ENCODE measurements at regions of chr17 and their contacts with region 1.

Region 1: GRCh38 chr17:28552246-28552999 is at the start of gene UNC119:
- DNase-seq: no peak
- ATAC-seq: peak; percentile 78
- H3K4me3 ChIP-seq: peak within 1 kb of the TSS; percentile 98
- H3K27ac ChIP-seq: peak within 1 kb of the TSS; percentile 73
- H3K4me1 ChIP-seq: peaks cover 33% of the 10 kb centered on the region
- H3K27me3 ChIP-seq: no peaks in the 10 kb centered on the region
- CTCF ChIP-seq: no peak
- EP300 ChIP-seq: no peak
- POLR2A ChIP-seq: peak; percentile 90
- RAD21 ChIP-seq: no peak
- polyA plus RNA-seq, gene UNC119: 2.7 to 7.4 TPM

Region 2: GRCh38 chr17:28446728-28447395 is 105.6 kb before region 1 on chr17:
- CTCF ChIA-PET with region 1: no interaction called
- POLR2A ChIA-PET with region 1: no interaction called
- RAD21 ChIA-PET with region 1: no interaction called
- SMC1A ChIA-PET with region 1: no interaction called
- in situ Hi-C with region 1: no loop called
- intact Hi-C with region 1: loop called (anchors 10 kb)
- DNase-seq: no peak
- ATAC-seq: no peak
- H3K4me3 ChIP-seq: no peak overlapping the region
- H3K27ac ChIP-seq: no peak overlapping the region
- H3K4me1 ChIP-seq: no peaks in the 10 kb centered on the region
- H3K27me3 ChIP-seq: no peaks in the 10 kb centered on the region
- CTCF ChIP-seq: no peak
- EP300 ChIP-seq: no peak
- POLR2A ChIP-seq: no peak
- RAD21 ChIP-seq: no peak

Region 3: DNA sequence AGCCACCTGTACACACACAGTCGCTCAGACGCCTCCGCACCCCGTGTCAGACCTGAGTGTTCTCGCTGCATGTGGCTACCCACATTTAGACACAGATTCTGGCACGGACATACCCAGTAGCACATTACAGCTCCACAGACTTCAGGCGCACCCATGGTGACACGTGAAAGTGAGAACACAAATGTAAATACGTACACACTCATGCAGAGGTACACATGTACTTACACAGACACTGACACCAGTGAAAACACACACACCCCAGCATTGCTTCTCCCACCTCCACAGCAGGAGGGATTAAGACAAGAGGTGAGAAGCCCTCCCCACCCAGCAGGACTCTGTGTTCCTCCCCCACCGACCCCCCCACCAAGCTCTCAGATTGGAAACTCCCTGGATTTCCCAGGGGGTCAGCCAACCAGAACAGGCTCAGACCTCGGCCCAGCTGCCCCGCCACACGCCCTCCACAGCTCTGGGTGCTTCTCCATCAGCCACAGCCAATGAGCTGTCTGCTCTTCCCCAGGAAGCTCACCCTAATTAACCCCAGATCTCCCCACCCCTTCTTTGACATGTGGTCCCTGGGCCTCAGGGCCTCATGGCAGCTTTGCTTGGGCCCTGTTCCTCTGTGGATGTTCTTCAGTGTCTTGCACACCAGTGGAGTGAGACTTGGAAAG is 51.6 kb before region 1 on chr17:
- CTCF ChIA-PET with region 1: interaction called, 316 read pairs
- POLR2A ChIA-PET with region 1: interaction called, 48 read pairs
- RAD21 ChIA-PET with region 1: interaction called, 37 read pairs
- SMC1A ChIA-PET with region 1: interaction called, 53 read pairs
- in situ Hi-C with region 1: loop called (anchors 5 kb)
- intact Hi-C with region 1: no loop called
- DNase-seq: peak; percentile 63
- ATAC-seq: peak; percentile 93
- H3K4me3 ChIP-seq: peak overlapping the region; percentile 59
- H3K27ac ChIP-seq: peak overlapping the region; percentile 87
- H3K4me1 ChIP-seq: peaks cover 26% of the 10 kb centered on the region
- H3K27me3 ChIP-seq: no peaks in the 10 kb centered on the region
- CTCF ChIP-seq: no peak
- EP300 ChIP-seq: no peak
- POLR2A ChIP-seq: peak; percentile 47; the same call in 1 of the 2 replicates
- RAD21 ChIP-seq: no peak

Region 4: DNA sequence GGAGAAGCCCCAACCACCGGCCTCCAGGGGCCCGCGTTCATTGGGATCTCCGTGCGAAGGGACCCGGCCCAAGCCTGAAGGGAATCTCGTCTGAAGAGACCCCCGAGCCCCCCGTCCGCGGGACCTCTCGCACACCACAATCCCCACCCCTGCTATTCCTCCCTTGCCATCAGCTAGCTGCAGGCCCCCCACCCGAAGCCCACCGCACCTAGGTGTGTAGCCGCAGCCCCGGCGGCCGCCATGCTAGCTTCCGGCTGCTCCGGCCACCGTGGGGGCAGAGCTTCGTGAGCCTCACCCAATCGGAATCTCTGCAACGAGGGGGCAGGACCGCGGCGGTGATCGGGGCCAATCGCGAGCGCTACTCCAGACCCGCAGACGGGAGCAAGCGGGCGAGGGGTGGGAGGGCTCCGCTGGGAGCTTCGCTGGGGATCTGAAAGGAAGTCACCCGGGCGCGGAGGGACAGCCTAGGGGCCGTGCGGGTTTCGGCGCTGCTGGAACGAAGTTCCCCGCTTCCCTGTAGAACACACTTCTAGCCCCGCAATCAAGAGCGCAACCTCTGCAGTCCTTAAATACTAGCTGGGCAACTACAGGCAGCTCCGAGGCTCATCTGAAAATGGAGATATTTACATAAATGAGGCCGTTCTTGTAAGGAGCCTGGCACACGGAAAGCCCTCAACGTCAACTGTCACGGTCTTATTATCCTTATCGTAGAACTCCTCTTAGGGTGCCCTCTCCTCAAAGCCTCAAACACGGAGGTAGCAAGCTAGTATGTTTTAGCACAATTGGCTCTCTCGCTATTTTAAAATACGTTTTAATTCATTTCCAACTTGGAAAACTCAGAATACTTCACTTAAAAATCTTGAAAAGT is 19.1 kb after region 1 on chr17 and contains the start of gene PIGS:
- CTCF ChIA-PET with region 1: interaction called, 83 read pairs
- POLR2A ChIA-PET with region 1: interaction called, 148 read pairs
- RAD21 ChIA-PET with region 1: interaction called, 102 read pairs
- SMC1A ChIA-PET with region 1: interaction called, 89 read pairs
- in situ Hi-C with region 1: no loop called
- intact Hi-C with region 1: loop called (anchors 1 kb)
- DNase-seq: peak; percentile 68
- ATAC-seq: peak; percentile 97
- H3K4me3 ChIP-seq: peak within 1 kb of the TSS; percentile 90
- H3K27ac ChIP-seq: peak within 1 kb of the TSS; percentile 85
- H3K4me1 ChIP-seq: peaks cover 22% of the 10 kb centered on the region
- H3K27me3 ChIP-seq: no peaks in the 10 kb centered on the region
- CTCF ChIP-seq: no peak
- EP300 ChIP-seq: no peak
- POLR2A ChIP-seq: peak; percentile 94
- RAD21 ChIP-seq: no peak
- polyA plus RNA-seq, gene PIGS: 27.5 to 32.2 TPM

Region 5: GRCh38 chr17:28598799-28599310 is 46.4 kb after region 1 on chr17 and contains the start of gene SPAG5:
- CTCF ChIA-PET with region 1: interaction called, 51 read pairs
- POLR2A ChIA-PET with region 1: interaction called, 14 read pairs
- RAD21 ChIA-PET with region 1: interaction called, 9 read pairs
- SMC1A ChIA-PET with region 1: interaction called, 25 read pairs
- in situ Hi-C with region 1: no loop called
- intact Hi-C with region 1: loop called (anchors 2 kb)
- DNase-seq: peak; percentile 80
- ATAC-seq: peak; percentile 95
- H3K4me3 ChIP-seq: peak within 1 kb of the TSS; percentile 98
- H3K27ac ChIP-seq: peak within 1 kb of the TSS; percentile 94
- H3K4me1 ChIP-seq: peaks cover 5% of the 10 kb centered on the region
- H3K27me3 ChIP-seq: no peaks in the 10 kb centered on the region
- CTCF ChIP-seq: no peak
- EP300 ChIP-seq: no peak
- POLR2A ChIP-seq: peak; percentile 95
- RAD21 ChIP-seq: no peak
- polyA plus RNA-seq, gene SPAG5: 73.5 to 139 TPM

Region 6: GRCh38 chr17:28644985-28645939 is 92.8 kb after region 1 on chr17 and contains the start of gene BLTP2:
- CTCF ChIA-PET with region 1: interaction called, 16 read pairs
- POLR2A ChIA-PET with region 1: interaction called, 11 read pairs
- RAD21 ChIA-PET with region 1: interaction called, 3 read pairs
- SMC1A ChIA-PET with region 1: no interaction called
- in situ Hi-C with region 1: no loop called
- intact Hi-C with region 1: no loop called
- DNase-seq: peak; percentile 82
- ATAC-seq: peak; percentile 97
- H3K4me3 ChIP-seq: peak within 1 kb of the TSS; percentile 85
- H3K27ac ChIP-seq: peak within 1 kb of the TSS; percentile 85
- H3K4me1 ChIP-seq: peaks cover 14% of the 10 kb centered on the region
- H3K27me3 ChIP-seq: no peaks in the 10 kb centered on the region
- CTCF ChIP-seq: no peak
- EP300 ChIP-seq: no peak
- POLR2A ChIP-seq: peak; percentile 86
- RAD21 ChIP-seq: no peak
- polyA plus RNA-seq, gene BLTP2: 14.2 to 16.9 TPM